Activated CD8-positive, alpha-beta T cell treated with anti-CD3 and anti-CD28 coated beads, Interleukin-2, amount 10 ng/mL, durations not matched to agents 7 days and 5 days (primary cell): ENCODE measurements at regions of chr12 and their contacts with region 1.

Region 1: DNA sequence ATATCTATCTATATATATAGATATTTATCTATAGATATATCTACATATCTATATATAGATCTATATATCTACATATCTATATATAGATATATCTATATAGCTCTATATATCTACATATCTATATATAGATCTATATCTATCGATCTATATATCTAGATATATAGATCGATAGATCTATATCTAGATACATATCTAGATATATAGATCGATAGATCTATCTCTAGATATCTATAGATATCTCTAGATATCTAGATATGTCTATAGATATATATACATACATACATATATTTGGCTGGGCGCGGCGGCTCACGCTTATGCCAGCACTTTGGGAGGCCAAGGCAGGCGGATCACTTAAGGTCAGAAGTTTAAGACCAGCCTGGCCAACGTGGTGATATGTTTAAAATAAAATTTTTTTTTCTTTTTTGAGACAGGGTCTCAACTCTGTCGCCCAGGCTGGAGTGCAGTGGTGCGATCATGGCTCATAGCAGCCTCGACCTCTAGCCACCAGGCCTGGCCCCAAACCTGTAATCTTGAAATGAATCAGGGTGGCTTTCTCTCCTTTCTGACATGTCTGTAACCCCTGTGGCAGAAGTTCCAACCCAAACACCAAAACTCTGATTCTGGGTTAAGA is 18.1 kb downstream of the ARPC3 start:
- DNase-seq: no peak
- ATAC-seq: no peak
- H3K4me3 Mint-ChIP-seq: no peak overlapping the region
- H3K27ac Mint-ChIP-seq: no peak overlapping the region
- H3K4me1 Mint-ChIP-seq: no peaks in the 10 kb centered on the region
- H3K27me3 Mint-ChIP-seq: no peaks in the 10 kb centered on the region

Region 2: DNA sequence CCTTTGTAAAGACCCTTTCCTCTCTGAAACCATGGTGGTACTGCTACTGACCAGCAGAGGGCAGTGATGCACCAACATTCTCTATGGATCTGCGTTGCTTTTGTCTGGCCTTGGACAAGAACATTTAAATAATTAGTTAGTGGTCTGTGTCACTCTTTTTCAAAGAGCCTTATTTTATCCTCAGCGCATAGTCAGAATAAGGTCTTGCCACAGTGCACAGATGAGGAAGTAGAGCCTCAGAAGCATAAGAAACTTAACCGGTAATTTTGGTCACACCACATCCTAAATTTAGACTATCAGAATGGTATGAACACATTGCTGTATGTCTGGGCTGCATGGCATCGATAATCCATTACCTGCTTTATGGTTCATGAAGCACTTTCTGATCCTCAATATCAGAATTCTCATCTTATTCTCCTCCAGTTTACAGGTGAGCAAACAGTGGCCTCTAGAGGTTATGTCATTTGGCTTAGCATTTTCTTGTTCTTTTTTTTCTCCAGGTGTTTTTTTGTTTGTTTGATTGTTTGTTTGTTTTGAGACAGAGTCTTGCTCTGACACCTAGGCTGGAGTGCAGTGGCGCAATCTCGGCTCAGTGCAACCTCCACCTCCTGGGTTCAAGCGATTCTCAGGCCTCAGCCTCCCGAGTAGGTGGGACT is 331.6 kb before region 1 on chr12:
- CTCF ChIA-PET with region 1: interaction called, 37 read pairs
- POLR2A ChIA-PET with region 1: interaction called, 6 read pairs
- DNase-seq: peak; percentile 76
- ATAC-seq: peak; percentile 69
- H3K4me3 Mint-ChIP-seq: no peak overlapping the region
- H3K27ac Mint-ChIP-seq: peak overlapping the region; percentile 44
- H3K4me1 Mint-ChIP-seq: peaks cover 16% of the 10 kb centered on the region
- H3K27me3 Mint-ChIP-seq: no peaks in the 10 kb centered on the region

Region 3: DNA sequence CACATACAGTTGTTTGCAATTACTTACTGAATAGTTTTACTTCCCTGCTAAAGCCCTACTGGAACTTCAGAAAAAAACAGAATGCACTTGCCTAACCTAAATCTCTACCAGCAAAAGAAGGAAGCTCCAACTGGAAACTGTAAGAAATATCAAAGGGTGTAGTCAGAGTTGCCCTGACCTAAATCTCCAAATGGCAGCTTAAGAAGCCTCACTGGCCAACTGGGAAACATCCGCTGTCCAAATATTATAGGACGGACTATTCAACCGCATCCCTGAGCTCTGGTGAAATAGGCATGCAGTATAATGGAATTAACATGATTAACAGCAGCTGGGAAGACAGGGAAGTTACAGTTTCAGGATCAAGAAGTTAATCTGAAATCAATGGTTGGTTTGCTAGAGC is 52.9 kb before region 1 on chr12:
- CTCF ChIA-PET with region 1: interaction called, 14 read pairs
- POLR2A ChIA-PET with region 1: interaction called, 4 read pairs
- DNase-seq: no peak
- ATAC-seq: no peak
- H3K4me3 Mint-ChIP-seq: no peak overlapping the region
- H3K27ac Mint-ChIP-seq: no peak overlapping the region
- H3K4me1 Mint-ChIP-seq: no peaks in the 10 kb centered on the region
- H3K27me3 Mint-ChIP-seq: no peaks in the 10 kb centered on the region

Region 4: DNA sequence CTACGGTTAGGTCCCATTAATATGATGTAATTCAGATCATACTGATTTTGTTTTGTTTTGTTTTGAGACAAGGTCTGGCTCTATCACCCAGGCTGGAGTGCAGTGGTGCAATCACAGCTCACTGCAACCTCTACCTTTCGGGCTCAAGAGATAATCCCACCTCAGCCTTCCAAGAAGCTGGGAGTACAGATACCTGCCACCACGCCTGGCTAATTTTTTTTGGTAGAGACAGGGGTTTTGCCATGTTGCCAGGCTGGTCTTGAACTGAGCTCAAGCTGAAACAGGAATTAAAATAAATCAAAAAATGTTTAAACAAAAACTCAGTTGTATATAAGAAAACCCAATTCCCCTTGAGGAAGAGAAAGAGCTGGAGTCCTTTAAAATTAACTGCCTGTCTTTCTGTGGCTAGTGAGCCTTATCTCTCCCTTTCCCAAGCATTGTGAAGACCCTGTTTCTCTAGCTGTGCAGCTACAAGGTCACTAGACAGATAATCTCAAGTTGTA is 10.9 kb before region 1 on chr12:
- CTCF ChIA-PET with region 1: interaction called, 16 read pairs
- POLR2A ChIA-PET with region 1: interaction called, 3 read pairs
- DNase-seq: no peak
- ATAC-seq: no peak
- H3K4me3 Mint-ChIP-seq: no peak overlapping the region
- H3K27ac Mint-ChIP-seq: no peak overlapping the region
- H3K4me1 Mint-ChIP-seq: no peaks in the 10 kb centered on the region
- H3K27me3 Mint-ChIP-seq: peaks cover 25% of the 10 kb centered on the region

Region 5: DNA sequence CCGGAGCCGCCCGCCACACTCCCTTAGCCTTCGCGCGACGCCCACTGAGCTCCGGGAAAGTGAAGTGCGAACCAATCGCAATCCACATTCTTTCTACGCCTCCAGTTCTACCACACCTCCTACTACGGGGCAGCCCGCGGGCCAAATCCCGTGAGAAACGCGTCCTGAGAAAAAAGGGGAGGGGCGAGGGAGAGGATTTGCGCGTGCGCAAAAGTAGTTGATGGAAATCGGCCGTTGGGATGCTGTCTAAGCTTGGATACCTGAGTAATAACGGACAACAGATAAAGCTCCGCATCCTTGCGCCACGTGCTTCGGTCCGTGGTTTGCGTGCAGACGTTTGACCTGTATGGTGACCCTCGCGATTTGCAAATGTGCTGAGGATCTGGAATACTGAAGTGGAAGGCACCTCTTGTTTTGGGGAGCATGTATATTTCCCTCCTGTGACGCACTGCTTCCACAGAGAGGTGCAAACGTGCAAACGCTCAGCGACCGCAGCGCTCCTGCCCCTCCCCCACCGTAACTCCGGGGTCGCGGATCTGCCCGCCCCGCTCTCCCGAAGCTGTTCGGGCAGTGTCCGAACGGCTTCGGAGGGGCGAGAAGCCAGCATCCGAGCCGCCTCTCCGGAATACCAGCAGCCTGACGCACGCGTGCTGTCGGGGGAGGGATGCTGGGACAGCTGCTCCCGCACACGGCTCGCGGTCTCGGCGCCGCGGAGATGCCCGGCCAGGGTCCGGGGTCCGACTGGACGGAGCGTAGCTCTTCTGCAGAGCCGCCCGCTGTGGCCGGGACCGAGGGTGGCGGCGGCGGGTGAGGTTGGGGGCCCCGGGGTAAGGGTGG is 36.4 kb after region 1 on chr12 and contains the starts of genes FAM216A and GPN3:
- CTCF ChIA-PET with region 1: interaction called, 13 read pairs
- POLR2A ChIA-PET with region 1: interaction called, 4 read pairs
- DNase-seq: peak; percentile 98
- ATAC-seq: peak; percentile 91
- H3K4me3 Mint-ChIP-seq: peak within 1 kb of the TSS; percentile 99
- H3K27ac Mint-ChIP-seq: peak within 1 kb of the TSS; percentile 94
- H3K4me1 Mint-ChIP-seq: peaks cover 28% of the 10 kb centered on the region
- H3K27me3 Mint-ChIP-seq: no peaks in the 10 kb centered on the region
- total RNA-seq, gene FAM216A: 20.5 to 22.9 TPM
- total RNA-seq, gene GPN3: 26.2 to 33.0 TPM

Region 6: GRCh38 chr12:110661337-110661972 is 229.4 kb after region 1 on chr12:
- CTCF ChIA-PET with region 1: no interaction called
- POLR2A ChIA-PET with region 1: no interaction called
- DNase-seq: peak; percentile 84
- ATAC-seq: peak; percentile 90
- H3K4me3 Mint-ChIP-seq: peak overlapping the region; percentile 51
- H3K27ac Mint-ChIP-seq: peak overlapping the region; percentile 95
- H3K4me1 Mint-ChIP-seq: peaks cover 34% of the 10 kb centered on the region
- H3K27me3 Mint-ChIP-seq: no peaks in the 10 kb centered on the region